Heart left ventricle (tissue), 16 donors: ENCODE measurements at regions of chr17 and their contacts with region 1.

Region 1: DNA sequence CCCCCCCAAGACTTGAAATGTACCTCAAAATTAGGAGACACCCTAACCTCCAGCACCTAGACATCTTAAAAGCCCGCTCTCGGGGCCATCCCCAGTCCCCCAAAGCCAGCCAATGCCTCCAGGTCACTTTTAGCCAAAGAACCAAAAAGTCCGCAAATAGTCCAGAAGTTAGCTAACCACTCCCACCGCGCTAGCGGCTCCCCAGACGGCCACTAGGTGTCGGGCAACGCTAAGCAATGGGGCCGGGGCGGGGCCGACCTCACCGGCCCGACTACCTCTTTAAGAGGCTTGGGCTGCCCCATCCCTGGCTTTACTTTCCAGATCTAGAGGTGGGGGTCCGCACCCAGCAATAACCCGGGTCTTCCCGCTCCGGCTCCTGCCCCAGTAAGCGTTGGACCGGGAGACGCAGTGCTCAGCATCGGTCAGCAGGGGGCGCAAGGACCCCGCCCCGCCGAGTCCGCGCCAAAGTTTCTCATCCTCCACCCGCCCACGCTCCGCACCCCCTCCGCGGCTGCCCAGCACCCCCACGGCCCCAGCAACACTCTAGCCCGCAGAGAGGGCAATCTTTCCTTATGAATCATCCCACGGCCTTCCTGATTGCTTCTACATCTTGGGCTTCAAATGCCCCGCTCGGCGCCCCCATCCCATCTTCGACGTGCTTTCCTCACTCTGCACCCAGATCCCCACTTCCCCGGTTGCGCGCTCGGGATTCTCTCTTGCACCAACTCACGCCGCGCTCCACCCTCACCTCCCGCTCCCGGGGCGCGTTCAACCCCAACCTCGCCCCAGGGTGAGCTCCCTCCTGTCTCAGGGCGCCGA is 765 bp downstream of the COL1A1 start:
- DNase-seq: peak; percentile 85 to 92 (median 88)
- ATAC-seq: peak; percentile 76 to 83 (median 80)
- H3K4me3 ChIP-seq: peak overlapping the region; percentile 13 to 74 (median 56)
- H3K27ac ChIP-seq: peak overlapping the region; percentile 34 to 95 (median 80)
- H3K4me1 ChIP-seq: peaks cover 0 to 61% (median 16%) of the 10 kb centered on the region in 12 donors
- H3K27me3 ChIP-seq: peaks cover 0 to 30% (median 14%) of the 10 kb centered on the region in 9 donors
- CTCF ChIP-seq: peak; percentile 98 to 100 (median 100)
- POLR2A ChIP-seq: no peak

Region 2: DNA sequence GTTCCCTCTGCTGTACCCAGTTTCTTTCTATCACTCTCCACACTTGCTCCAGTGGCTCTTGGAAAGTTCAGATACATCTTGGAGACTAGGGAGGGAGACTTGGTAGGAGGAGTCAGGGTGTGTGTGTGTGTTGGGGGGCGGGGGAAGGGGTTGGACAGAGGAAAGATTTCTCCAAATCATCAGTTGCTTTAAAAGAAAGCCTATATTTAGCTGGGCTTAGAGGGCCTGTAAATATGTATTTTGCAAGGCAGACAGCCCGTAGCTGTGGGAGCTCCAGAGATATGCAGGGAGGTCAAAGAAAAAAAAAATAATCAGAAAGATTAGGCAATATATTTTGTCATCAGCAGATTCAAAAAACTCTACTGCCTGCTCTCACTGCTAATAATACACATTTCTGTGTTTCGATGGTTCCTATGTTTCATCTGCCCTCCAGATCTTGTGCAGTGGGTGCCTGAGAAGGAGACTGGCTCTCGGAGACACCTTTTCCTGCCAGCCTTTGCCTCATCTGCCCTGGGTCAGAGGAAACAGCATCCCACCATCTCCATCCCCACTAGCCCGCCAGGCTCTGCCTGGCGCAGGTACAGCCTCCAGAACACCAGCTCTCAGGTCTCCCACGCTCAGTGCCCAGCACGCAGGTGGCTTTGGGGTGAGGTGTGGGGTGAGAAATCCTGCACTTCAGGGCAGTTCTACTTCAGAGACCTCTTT is 45.4 kb before region 1 on chr17:
- intact Hi-C with region 1: no loop called
- DNase-seq: peak in 2 of 5 donors; percentile 42 to 59
- ATAC-seq: no peak
- H3K4me3 ChIP-seq: no peak overlapping the region
- H3K27ac ChIP-seq: peak overlapping the region in 11 of 12 donors; percentile 70 to 99 (median 97)
- H3K4me1 ChIP-seq: peaks cover 0 to 50% (median 41%) of the 10 kb centered on the region in 12 donors
- H3K27me3 ChIP-seq: no peaks in the 10 kb centered on the region
- CTCF ChIP-seq: no peak
- POLR2A ChIP-seq: no peak

Region 3: GRCh38 chr17:50169121-50169764 is 31.4 kb before region 1 on chr17:
- intact Hi-C with region 1: loop called in 2 of 10 experiments (anchors 2 kb)
- DNase-seq: peak in 3 of 5 donors; percentile 47 to 59 (median 52)
- ATAC-seq: peak in 3 of 4 donors; percentile 4 to 19 (median 6)
- H3K4me3 ChIP-seq: no peak overlapping the region
- H3K27ac ChIP-seq: peak overlapping the region in 4 of 12 donors; percentile 9 to 94 (median 30)
- H3K4me1 ChIP-seq: peaks cover 0 to 80% (median 23%) of the 10 kb centered on the region in 12 donors
- H3K27me3 ChIP-seq: no peaks in the 10 kb centered on the region
- CTCF ChIP-seq: peak; percentile 30 to 71 (median 52)
- POLR2A ChIP-seq: no peak

Region 4: GRCh38 chr17:50269477-50270434 is 69.1 kb after region 1 on chr17:
- intact Hi-C with region 1: loop called (anchors 1 to 2 kb)
- DNase-seq: peak in 4 of 5 donors; percentile 57 to 71 (median 67)
- ATAC-seq: peak; percentile 44 to 76 (median 64)
- H3K4me3 ChIP-seq: peak overlapping the region in 1 of 12 donors; percentile 13
- H3K27ac ChIP-seq: peak overlapping the region in 8 of 12 donors; percentile 0 to 79 (median 38)
- H3K4me1 ChIP-seq: peaks cover 0 to 48% (median 13%) of the 10 kb centered on the region in 12 donors
- H3K27me3 ChIP-seq: peaks cover 5 to 16% (median 12%) of the 10 kb centered on the region in 9 donors
- CTCF ChIP-seq: peak; percentile 52 to 81 (median 65)
- POLR2A ChIP-seq: no peak

Region 5: GRCh38 chr17:50297407-50297865 is 96.8 kb after region 1 on chr17:
- intact Hi-C with region 1: loop called (anchors 1 to 2 kb)
- DNase-seq: peak; percentile 67 to 87 (median 74)
- ATAC-seq: peak; percentile 87 to 93 (median 92)
- H3K4me3 ChIP-seq: no peak overlapping the region
- H3K27ac ChIP-seq: no peak overlapping the region
- H3K4me1 ChIP-seq: no peaks in the 10 kb centered on the region
- H3K27me3 ChIP-seq: peaks cover 0 to 3% (median 0%) of the 10 kb centered on the region in 9 donors
- CTCF ChIP-seq: peak; percentile 86 to 97 (median 94)
- POLR2A ChIP-seq: no peak

Region 6: DNA sequence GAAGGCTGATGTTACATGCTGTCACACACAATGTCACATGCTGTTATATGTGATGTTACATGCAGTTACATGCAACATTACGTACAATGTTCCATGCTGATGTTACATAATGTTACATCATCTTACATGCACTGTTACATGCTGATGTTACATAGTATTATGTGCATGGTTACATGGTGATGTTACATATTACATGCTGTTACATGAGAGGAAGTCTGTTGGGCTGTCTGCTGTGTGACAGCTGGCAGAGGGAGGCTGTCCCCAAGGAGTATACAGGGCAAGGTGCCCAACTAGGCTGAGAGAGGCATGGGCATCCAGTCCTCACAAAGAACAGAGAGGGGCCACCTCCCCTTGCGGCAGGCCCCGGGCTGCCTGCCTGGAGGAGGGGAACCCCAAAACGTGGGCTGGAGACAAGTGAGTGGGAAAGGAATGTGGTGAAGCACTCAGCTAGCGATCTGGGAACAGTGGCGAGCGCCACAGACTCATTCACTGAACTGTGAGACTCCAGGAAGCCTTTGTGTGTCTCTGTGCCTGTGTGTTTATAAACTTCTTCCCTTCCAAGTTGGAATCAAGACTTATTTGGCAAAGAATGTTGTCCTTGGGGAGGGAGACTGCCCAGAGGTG is 104.2 kb after region 1 on chr17:
- intact Hi-C with region 1: loop called in 1 of 10 experiments (anchors 2 kb)
- DNase-seq: no peak
- ATAC-seq: peak in 3 of 4 donors; percentile 18 to 31 (median 22)
- H3K4me3 ChIP-seq: no peak overlapping the region
- H3K27ac ChIP-seq: no peak overlapping the region
- H3K4me1 ChIP-seq: peaks cover 0 to 10% (median 2%) of the 10 kb centered on the region in 12 donors
- H3K27me3 ChIP-seq: peaks cover 0 to 4% (median 0%) of the 10 kb centered on the region in 9 donors
- CTCF ChIP-seq: no peak
- POLR2A ChIP-seq: no peak